Dendritic cell treated with granulocyte-macrophage colony-stimulating factor and Interleukin-4, amounts not matched to agents 40 ng/mL and 50 ng/mL, for 4 days (primary cell): ENCODE measurements at regions of chr6 and their contacts with region 1.

Region 1: GRCh38 chr6:68634726-68635411 is at the start of gene ADGRB3:
- H3K4me3 Mint-ChIP-seq: peak within 1 kb of the TSS; percentile 74
- H3K27ac Mint-ChIP-seq: peak within 1 kb of the TSS; percentile 17
- H3K4me1 Mint-ChIP-seq: peaks cover 29% of the 10 kb centered on the region
- H3K27me3 Mint-ChIP-seq: peaks cover 50% of the 10 kb centered on the region

Region 2: DNA sequence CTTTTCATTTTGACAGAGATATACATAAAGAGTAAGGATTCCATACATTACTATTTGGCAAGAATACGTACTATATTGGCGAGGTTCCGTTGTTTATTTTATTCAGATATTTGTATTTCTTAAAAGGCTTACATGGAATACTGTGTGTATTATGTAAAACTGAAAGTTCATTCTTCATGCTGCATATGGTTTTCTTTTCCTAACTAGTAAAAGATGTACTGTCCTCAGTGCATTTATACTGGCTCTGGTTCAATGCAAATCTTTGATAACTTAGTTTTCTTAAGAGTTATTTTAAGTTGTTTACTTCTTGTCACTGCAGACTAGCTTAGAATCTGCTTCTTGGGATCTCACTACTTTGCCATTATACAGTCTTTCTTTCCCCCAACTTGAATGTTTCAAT is 42.2 kb after region 1 on chr6:
- intact Hi-C with region 1: no loop called
- H3K4me3 Mint-ChIP-seq: no peak overlapping the region
- H3K27ac Mint-ChIP-seq: no peak overlapping the region
- H3K4me1 Mint-ChIP-seq: peaks cover 5% of the 10 kb centered on the region
- H3K27me3 Mint-ChIP-seq: no peaks in the 10 kb centered on the region

Region 3: DNA sequence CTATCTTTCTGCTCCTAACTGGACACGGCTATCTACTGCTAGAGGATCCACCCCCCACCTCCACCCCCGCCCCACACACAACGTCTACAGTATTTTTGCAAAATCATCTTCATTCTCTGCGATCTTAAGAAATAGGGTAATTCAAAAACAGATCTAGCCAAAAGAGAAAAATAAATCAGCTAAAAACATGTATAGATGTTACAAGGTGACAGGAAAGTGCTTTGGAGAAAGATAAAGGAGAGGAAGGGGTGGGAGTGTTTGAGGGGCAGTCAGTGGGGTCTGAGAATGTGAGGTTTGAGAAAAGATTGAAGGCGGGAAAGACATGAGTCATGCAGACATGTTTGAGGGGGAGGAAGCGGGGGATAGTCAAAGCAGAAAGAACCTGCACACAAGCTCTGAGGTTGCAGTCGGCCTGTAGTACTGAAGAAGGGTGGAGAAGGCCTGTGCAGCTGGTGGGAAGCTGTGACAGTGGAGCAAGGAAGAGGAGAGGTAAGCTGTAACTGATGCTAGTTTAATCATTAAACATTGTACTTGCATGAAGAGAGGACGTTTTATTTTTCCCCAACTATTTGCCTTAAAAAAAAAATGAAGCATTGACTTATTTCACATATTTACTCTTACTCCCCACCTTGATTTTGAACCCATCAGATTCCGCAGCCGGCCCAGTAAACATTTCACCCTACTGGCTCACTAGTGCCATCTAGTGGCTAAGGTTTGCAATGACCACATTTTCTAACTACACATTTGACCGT is 332.9 kb after region 1 on chr6:
- intact Hi-C with region 1: loop called (anchors 5 kb)
- H3K4me3 Mint-ChIP-seq: no peak overlapping the region
- H3K27ac Mint-ChIP-seq: no peak overlapping the region
- H3K4me1 Mint-ChIP-seq: peaks cover 13% of the 10 kb centered on the region
- H3K27me3 Mint-ChIP-seq: peaks cover 9% of the 10 kb centered on the region